ENCODE measurements at regions of chr11 and their contacts with region 1.

Region 1: DNA sequence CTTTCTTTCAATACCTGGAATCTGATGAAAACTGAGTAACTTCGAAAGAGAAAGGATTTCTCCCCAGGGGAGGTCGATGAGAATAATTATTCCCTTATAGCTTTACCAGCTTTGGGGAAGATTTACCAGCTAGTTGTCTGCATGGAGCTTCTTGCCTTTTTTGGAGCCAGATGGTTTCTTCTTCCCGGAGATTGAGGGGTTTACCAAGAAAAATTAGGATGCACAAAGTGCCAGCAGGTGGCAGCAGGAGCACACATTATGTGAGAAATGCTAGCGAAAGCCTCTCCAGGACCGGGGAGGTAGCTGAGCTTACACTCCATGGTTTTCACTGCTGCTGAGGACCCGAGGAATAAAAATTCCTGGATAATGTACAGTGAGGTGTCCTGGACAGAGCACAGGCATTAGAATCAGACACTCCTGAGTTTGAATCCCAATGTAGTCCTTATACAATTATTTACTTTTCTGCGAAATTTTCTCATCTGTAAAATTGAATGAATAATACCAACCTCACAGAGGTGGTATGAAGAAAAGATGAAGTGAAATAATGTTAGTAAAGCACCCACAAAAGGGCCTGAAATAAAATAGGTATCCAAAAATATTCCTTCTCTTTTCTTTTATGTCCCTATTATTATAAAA is 46.0 kb upstream of the PARVA start:
- DNase-seq: peak; percentile 47
- CTCF ChIP-seq: peak; percentile 83

Region 2: DNA sequence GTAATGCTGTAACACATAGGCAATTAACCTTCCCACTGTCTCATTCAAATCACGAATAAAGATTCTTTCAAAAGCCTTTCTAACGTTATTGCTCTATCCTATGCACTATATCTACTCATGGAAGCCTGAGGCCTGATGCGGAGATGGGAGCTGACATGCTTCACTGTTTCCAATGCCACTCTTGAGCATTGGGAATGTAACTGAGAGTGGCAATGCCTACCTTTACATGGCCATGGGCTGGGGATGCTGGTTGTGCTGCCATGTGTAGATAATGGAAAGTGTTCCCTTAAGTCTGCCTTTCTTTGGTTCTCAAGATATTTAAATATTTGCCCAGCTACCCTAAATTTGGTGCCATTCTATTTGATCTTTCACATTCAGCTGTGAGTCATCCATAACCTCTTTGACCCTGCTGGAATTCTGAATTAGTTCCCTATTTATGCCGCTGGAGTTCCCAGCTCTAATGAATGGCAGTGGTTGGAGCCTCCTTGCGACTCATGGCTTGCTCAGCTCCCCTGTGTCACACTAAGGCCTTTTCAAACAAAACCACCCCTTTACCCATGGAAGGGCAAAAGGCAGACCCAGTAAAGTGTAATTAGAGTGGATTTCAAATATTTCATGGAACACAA is 301.5 kb before region 1 on chr11:
- CTCF ChIA-PET with region 1: no interaction called
- POLR2A ChIA-PET with region 1: no interaction called
- DNase-seq: no peak
- CTCF ChIP-seq: no peak

Region 3: GRCh38 chr11:12248338-12248737 is 83.0 kb before region 1 on chr11:
- CTCF ChIA-PET with region 1: no interaction called
- POLR2A ChIA-PET with region 1: no interaction called
- DNase-seq: no peak
- CTCF ChIP-seq: no peak

Region 4: GRCh38 chr11:12318791-12319438 is 12.4 kb before region 1 on chr11:
- CTCF ChIA-PET with region 1: interaction called, 15 read pairs
- POLR2A ChIA-PET with region 1: no interaction called
- DNase-seq: no peak
- CTCF ChIP-seq: no peak

Region 5: GRCh38 chr11:12343526-12343925 is 12.2 kb after region 1 on chr11:
- CTCF ChIA-PET with region 1: interaction called, 13 read pairs
- POLR2A ChIA-PET with region 1: no interaction called
- DNase-seq: no peak
- CTCF ChIP-seq: no peak

Region 6: DNA sequence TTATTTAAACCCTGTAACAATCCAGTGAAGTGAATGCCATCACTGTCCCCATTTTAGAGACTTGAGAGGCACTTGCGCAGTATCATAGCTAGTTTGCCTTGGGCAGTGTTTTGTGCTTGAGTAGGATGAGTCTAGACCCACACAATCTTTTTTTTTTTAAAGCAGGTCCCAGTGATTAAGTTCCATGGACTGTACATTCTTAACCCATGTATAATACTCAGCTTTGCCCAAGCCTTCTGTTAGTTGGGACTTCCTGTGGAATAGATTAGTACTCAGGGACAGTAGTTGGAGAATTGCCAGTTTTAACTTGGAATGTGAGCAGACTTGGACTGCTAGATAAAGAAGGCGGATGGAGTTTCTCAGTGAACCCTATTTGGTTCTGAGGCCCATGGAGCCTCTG is 569.1 kb after region 1 on chr11:
- CTCF ChIA-PET with region 1: interaction called, 22 read pairs
- POLR2A ChIA-PET with region 1: no interaction called
- DNase-seq: no peak
- CTCF ChIP-seq: no peak

Measured in GM10248 (cell line).